Gastrocnemius medialis (tissue), 4 donors: ENCODE measurements at regions of chr5 and their contacts with region 1.

Region 1: DNA sequence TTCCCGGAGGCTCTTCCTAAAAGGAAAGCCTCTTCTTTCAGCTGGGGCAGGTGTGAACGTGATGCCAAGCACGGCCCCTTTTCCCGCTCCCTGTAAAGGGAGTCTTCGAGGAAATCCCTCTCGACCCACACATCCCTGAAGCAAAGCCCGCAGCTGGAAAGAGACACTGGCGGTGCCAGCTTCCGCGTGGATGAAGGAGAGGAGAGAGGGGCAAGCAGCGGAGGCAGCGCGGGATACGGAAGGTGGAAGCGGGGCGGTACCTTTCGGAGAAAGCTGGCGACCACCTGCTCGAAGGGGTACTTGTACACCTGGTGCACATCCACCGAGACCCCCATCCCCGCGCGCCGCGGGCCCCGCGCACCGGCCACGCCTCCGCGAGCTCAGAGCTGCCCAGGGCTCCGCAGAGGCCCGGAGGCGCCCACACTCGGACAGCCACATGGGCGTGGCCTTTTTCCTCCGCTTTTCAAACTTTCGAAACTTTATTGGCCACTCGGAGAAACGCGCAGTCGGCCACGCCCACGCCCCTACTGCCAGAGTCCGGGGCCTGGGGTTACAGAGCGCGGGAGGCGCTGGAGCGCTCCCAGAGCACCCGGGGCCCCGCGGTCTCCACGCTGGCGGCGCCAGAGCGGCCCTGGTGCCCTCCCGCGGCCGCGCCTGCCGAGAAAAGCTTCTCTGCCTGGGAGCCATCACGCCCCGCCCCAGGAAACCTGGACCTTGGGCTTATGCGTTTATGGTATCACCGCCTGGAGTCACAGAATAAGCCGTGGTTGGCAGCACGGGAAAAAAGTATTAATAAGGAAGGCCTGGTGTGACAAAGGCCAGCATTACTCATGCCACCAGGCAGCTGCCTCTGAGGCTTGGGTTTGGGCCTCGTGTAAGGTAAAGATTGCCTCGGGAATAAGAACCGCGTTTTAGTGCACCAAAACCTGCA is at the start of gene PRELID2:
- DNase-seq: peak; percentile 64 to 77
- ATAC-seq: peak; percentile 92 to 93
- H3K4me3 ChIP-seq: peak within 1 kb of the TSS; percentile 63 to 75 (median 67)
- H3K27ac ChIP-seq: peak within 1 kb of the TSS; percentile 56 to 77 (median 65)
- H3K4me1 ChIP-seq: peaks cover 7 to 8% of the 10 kb centered on the region in 2 donors
- H3K27me3 ChIP-seq: no peaks in the 10 kb centered on the region
- CTCF ChIP-seq: no peak
- POLR2A ChIP-seq: peak; percentile 35 to 48
- total RNA-seq, gene PRELID2: 1.1 to 6.7 (median 1.2) TPM in 3 of 4 donors, not detected in the other

Region 2: DNA sequence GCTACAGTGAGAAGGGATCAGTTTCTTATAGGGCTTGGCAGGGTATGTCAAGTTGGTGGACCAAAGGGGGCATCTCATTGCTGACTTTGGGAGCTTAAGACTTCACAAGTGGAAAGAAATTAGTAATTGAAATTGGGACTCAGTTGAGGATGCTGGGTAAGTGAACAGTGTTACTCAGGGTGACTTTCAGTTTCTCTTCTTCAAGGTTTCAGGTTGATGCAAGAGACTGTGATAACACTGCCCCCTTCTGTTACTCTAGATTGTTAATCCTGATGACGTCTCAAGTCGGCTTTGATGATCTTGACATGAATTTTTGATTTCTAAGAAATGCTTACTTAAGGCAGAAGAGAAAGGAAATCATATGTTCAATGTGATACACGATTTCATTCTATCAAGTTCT is 1643.2 kb before region 1 on chr5:
- in situ Hi-C with region 1: loop called in 2 of 4 experiments (anchors 25 kb)
- intact Hi-C with region 1: no loop called
- DNase-seq: no peak
- ATAC-seq: no peak
- H3K4me3 ChIP-seq: no peak overlapping the region
- H3K27ac ChIP-seq: no peak overlapping the region
- H3K4me1 ChIP-seq: peaks cover 5 to 6% of the 10 kb centered on the region in 2 donors
- H3K27me3 ChIP-seq: no peaks in the 10 kb centered on the region
- CTCF ChIP-seq: no peak
- POLR2A ChIP-seq: no peak